ENCODE measurements at regions of chr5 and their contacts with region 1.

Region 1: GRCh38 chr5:174306345-174307030 is 261.0 kb downstream of the NSG2 start:
- DNase-seq: no peak
- H3K4me3 ChIP-seq: no peak overlapping the region
- H3K27ac ChIP-seq: no peak overlapping the region
- H3K4me1 ChIP-seq: peaks cover 0 to 6% (median 3%) of the 10 kb centered on the region in 4 donors
- H3K27me3 ChIP-seq: peaks cover 0 to 14% of the 10 kb centered on the region in 2 donors
- CTCF ChIP-seq: no peak

Region 2: GRCh38 chr5:174755103-174755502 is 448.6 kb after region 1 on chr5:
- intact Hi-C with region 1: no loop called
- DNase-seq: no peak
- H3K4me3 ChIP-seq: no peak overlapping the region
- H3K27ac ChIP-seq: no peak overlapping the region
- H3K4me1 ChIP-seq: peaks cover 0 to 11% (median 10%) of the 10 kb centered on the region in 4 donors
- H3K27me3 ChIP-seq: peaks cover 0 to 27% of the 10 kb centered on the region in 2 donors
- CTCF ChIP-seq: peak; percentile 13 to 23

Region 3: GRCh38 chr5:174852143-174852542 is 545.7 kb after region 1 on chr5:
- intact Hi-C with region 1: loop called (anchors 5 kb)
- DNase-seq: no peak
- H3K4me3 ChIP-seq: no peak overlapping the region
- H3K27ac ChIP-seq: no peak overlapping the region
- H3K4me1 ChIP-seq: no peaks in the 10 kb centered on the region
- H3K27me3 ChIP-seq: peaks cover 0 to 3% of the 10 kb centered on the region in 2 donors
- CTCF ChIP-seq: no peak

Measured in tibial artery (tissue), 4 donors.